ENCODE measurements at regions of chr6 and their contacts with region 1.

Region 1: GRCh38 chr6:142474531-142475289 is 172.9 kb downstream of the ADGRG6 start:
- DNase-seq: no peak
- H3K4me3 ChIP-seq: no peak overlapping the region
- CTCF ChIP-seq: peak; percentile 52

Region 2: GRCh38 chr6:141370438-141370837 is 1104.3 kb before region 1 on chr6:
- CTCF ChIA-PET with region 1: no interaction called
- POLR2A ChIA-PET with region 1: no interaction called
- DNase-seq: no peak
- H3K4me3 ChIP-seq: no peak overlapping the region
- CTCF ChIP-seq: no peak

Region 3: DNA sequence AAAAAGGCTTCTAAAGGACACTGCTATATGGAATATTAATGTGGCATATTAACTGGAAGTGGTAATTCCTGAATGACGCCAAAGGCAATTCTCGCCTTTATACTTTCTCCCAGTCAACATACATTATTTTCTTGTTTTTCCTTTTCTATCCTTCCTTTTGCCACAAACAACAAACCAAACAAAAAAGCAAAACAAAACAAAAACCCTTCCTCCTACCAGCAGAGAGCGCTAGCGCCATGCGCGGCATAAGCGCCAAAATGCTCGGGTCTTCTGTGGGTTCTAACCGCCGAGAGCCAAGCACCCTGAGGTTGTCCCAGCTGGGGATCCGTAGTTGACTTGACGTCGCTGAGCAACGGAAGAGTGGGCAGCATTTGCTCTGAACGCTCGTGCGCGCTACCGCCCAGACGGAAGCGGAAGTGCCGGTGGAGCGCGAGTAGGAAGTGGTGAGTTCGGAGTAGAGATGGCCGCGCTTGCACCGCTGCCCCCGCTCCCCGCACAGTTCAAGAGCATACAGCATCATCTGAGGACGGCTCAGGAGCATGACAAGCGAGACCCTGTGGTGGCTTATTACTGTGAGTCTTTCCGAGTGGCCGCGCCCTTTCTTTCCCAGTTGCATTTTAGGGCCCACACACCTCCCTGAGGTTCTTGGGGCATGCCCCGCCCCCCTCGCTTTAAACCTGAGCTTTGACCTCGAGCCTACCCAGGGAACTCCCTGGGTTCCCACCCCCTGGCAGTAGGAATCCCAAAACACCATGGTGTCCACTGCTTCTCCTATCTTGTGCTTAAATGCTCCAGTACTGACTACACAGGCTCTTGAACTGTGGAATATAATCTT is 327.7 kb before region 1 on chr6 and contains the starts of genes NMBR and VTA1:
- CTCF ChIA-PET with region 1: interaction called, 12 read pairs
- POLR2A ChIA-PET with region 1: no interaction called
- DNase-seq: peak; percentile 96
- H3K4me3 ChIP-seq: peak within 1 kb of the TSS; percentile 97
- CTCF ChIP-seq: peak; percentile 85

Region 4: GRCh38 chr6:142350309-142350708 is 124.4 kb before region 1 on chr6:
- CTCF ChIA-PET with region 1: no interaction called
- POLR2A ChIA-PET with region 1: no interaction called
- DNase-seq: no peak
- H3K4me3 ChIP-seq: no peak overlapping the region
- CTCF ChIP-seq: no peak

Region 5: GRCh38 chr6:142361782-142362750 is 112.6 kb before region 1 on chr6:
- CTCF ChIA-PET with region 1: no interaction called
- POLR2A ChIA-PET with region 1: no interaction called
- DNase-seq: peak; percentile 99
- H3K4me3 ChIP-seq: no peak overlapping the region
- CTCF ChIP-seq: no peak

Region 6: DNA sequence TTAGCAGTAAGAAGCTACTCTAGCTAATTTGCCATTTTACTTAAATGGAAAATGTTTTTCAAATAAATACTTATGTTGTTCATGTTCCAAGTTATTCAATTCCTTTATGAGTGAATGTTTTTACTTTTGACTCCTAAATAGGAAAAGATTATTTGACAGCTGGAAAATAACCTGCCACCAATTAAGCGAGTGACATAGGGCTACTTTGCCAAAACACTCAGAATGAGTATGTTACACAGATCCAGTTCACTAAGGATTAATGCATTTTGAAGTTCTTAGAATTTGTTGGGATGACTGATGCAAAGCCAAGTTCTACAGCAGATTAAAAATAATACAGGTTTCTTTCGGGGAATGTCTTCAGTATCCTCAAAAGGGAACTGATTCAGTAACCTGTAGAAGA is 28.5 kb before region 1 on chr6:
- CTCF ChIA-PET with region 1: interaction called, 11 read pairs
- POLR2A ChIA-PET with region 1: interaction called, 4 read pairs
- DNase-seq: no peak
- H3K4me3 ChIP-seq: no peak overlapping the region
- CTCF ChIP-seq: no peak

Region 7: DNA sequence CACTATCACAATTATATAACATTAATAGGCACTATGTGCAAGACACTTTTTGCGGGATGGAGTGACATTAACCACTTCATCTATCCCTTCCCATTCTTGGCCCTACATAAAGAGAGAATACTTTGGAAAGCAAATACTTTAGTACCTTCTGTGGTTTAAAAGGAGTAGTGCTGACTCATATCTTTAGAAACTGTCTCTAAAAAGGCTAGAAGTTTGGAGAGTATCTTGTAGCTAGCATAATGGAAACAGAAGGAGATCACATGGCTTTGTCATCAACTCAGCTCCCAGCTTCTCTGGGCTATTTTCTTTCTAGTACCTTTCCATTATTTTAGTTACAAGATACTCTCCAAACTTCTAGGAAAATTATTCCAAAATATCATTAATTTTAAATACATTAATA is 15.4 kb before region 1 on chr6:
- CTCF ChIA-PET with region 1: interaction called, 14 read pairs
- POLR2A ChIA-PET with region 1: no interaction called
- DNase-seq: peak; percentile 23
- H3K4me3 ChIP-seq: no peak overlapping the region
- CTCF ChIP-seq: no peak

Region 8: GRCh38 chr6:142500250-142500786 is 25.6 kb after region 1 on chr6:
- CTCF ChIA-PET with region 1: interaction called, 11 read pairs
- POLR2A ChIA-PET with region 1: no interaction called
- DNase-seq: no peak
- H3K4me3 ChIP-seq: no peak overlapping the region
- CTCF ChIP-seq: no peak

Region 9: DNA sequence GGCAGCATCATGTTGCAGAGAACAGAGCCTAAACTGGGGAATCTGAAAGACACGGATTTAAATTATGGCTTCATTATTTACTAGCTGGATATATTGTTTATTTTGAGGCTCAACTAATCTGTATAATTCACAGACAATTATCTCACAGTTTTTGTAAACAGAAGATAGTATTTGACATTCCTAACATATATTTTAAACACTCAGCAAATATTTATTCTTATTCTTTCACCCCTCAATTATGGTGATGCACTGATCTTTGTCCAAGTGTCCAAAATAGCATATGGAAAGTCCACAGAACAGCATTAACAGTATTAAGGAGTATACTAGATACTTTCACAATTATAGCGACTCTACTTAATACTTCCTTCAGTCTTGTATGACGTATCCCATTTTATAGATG is 84.1 kb after region 1 on chr6:
- CTCF ChIA-PET with region 1: no interaction called
- POLR2A ChIA-PET with region 1: no interaction called
- DNase-seq: no peak
- H3K4me3 ChIP-seq: no peak overlapping the region
- CTCF ChIP-seq: no peak

Region 10: DNA sequence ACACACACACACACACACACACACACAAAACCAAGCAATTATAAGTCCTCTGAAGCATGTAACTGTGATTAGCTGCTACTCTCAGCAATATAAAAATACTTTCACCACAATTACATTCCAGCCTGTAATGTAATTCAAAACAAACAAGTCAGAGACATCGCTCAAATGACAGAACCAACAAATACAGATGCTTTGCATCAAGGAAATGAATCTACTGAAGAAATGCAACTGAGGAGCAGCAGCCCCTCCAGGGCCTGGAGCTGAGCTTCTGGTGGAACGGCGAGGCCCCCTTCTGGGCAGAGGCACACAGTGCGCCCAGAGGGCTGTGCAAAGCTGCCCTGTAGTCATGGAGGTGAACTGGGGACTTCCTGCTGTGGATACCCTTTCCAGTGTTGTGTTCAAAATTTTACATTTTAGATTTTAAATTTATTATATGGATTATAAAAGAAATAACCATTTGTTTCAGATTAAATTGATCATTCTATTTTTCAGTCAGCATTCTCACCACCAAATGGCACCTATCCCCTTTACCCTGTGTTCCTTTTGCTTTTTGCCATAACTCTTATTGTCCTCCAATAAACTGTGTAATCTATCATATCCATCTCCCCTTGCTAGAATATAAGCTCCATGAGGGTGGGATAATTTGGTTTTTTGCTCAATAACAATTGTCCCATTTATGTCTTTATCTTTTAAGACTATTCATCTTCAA is 952.6 kb after region 1 on chr6:
- CTCF ChIA-PET with region 1: interaction called, 49 read pairs
- POLR2A ChIA-PET with region 1: no interaction called
- DNase-seq: peak; percentile 80
- H3K4me3 ChIP-seq: no peak overlapping the region
- CTCF ChIP-seq: peak; percentile 99

Measured in AG04449 (cell line).